GM12878 (cell line): ENCODE measurements at regions of chr10 and their contacts with region 1.

Region 1: GRCh38 chr10:107653832-107654287 is 489.4 kb upstream of the SORCS1 start:
- DNase-seq: peak; percentile 37
- ATAC-seq: peak; percentile 88
- H3K4me3 ChIP-seq: peak overlapping the region; percentile 62
- H3K27ac ChIP-seq: peak overlapping the region; percentile 41
- H3K4me1 ChIP-seq: 0 out of 2 replicates have a peak, but pooled peaks cover 6% of the 10 kb centered on the region
- H3K27me3 ChIP-seq: no peaks in the 10 kb centered on the region
- CTCF ChIP-seq: no peak
- EP300 ChIP-seq: no peak
- POLR2A ChIP-seq: no peak
- RAD21 ChIP-seq: no peak

Region 2: DNA sequence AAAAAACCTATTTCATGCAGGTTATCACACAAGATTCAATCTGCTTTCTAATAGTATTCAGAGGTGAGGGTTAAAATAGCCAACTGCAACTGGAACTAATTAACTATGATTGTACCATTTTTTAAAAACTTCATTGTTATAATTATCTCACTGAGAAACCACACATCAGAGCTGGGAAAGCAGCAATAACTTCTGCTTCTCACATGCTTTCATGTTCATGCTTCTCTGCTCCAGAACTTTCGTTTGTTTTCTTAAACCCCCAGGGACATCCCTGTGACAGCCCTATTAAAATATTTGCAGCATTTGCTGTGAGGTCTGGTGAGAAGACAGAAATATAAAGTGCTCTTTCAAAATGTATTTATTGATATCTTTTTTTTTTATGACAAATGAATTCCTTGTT is 100.4 kb before region 1 on chr10:
- CTCF ChIA-PET with region 1: interaction called, 3 read pairs
- POLR2A ChIA-PET with region 1: no interaction called
- RAD21 ChIA-PET with region 1: interaction called, 7 read pairs
- SMC1A ChIA-PET with region 1: interaction called, 10 read pairs
- in situ Hi-C with region 1: no loop called
- intact Hi-C with region 1: no loop called
- DNase-seq: peak; percentile 37
- ATAC-seq: peak; percentile 86
- H3K4me3 ChIP-seq: no peak overlapping the region
- H3K27ac ChIP-seq: no peak overlapping the region
- H3K4me1 ChIP-seq: no peaks in the 10 kb centered on the region
- H3K27me3 ChIP-seq: no peaks in the 10 kb centered on the region
- CTCF ChIP-seq: no peak
- EP300 ChIP-seq: peak in 1 of 2 experiments; percentile 71; a peak in 2 of 4 replicates
- POLR2A ChIP-seq: no peak
- RAD21 ChIP-seq: no peak